GM18951 (cell line): ENCODE measurements at regions of chr3 and their contacts with region 1.

Region 1: GRCh38 chr3:66423791-66424190 is 77.0 kb downstream of the LRIG1 start:
- POLR2A ChIP-seq: no peak

Region 2: GRCh38 chr3:65979162-65979561 is 444.6 kb before region 1 on chr3:
- in situ Hi-C with region 1: no loop called
- POLR2A ChIP-seq: no peak

Region 3: GRCh38 chr3:66464512-66464894 is 40.7 kb after region 1 on chr3:
- in situ Hi-C with region 1: loop called (anchors 5 kb)
- POLR2A ChIP-seq: no peak